ENCODE measurements at regions of chrX and their contacts with region 1.

Region 1: GRCh38 chrX:136880452-136881013 is at the start of gene RBMX:
- DNase-seq: peak; percentile 94
- ATAC-seq: peak; percentile 84
- H3K4me3 Mint-ChIP-seq: peak within 1 kb of the TSS; percentile 97
- H3K27ac Mint-ChIP-seq: peak within 1 kb of the TSS; percentile 99
- H3K4me1 Mint-ChIP-seq: peaks cover 21% of the 10 kb centered on the region
- H3K27me3 Mint-ChIP-seq: no peaks in the 10 kb centered on the region
- total RNA-seq, gene RBMX: 265 to 276 TPM

Region 2: DNA sequence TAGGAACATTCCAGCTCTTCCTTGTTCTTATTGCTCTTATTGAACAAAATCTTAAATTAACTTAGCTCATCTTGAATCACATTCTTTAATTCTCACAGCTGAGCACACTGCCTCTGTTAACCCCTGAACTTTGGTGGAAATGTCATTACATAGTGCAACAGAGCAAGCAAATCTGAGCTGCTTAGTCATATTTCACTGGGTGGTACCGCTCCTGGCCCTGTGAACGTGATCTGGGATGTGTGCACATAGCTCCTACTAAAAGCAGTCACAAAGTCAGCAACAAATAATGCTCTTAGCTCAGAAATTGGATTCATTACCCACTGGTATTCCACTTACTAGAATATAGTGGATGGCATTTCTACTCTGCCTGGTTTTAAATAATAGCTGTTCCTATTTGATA is 127.7 kb before region 1 on chrX:
- CTCF ChIA-PET with region 1: no interaction called
- POLR2A ChIA-PET with region 1: interaction called, 10 read pairs
- DNase-seq: no peak
- ATAC-seq: no peak
- H3K4me3 Mint-ChIP-seq: no peak overlapping the region
- H3K27ac Mint-ChIP-seq: no peak overlapping the region
- H3K4me1 Mint-ChIP-seq: peaks cover 88% of the 10 kb centered on the region
- H3K27me3 Mint-ChIP-seq: no peaks in the 10 kb centered on the region

Region 3: GRCh38 chrX:136767104-136767941 is 113.2 kb before region 1 on chrX:
- CTCF ChIA-PET with region 1: no interaction called
- POLR2A ChIA-PET with region 1: interaction called, 25 read pairs
- DNase-seq: peak; percentile 65
- ATAC-seq: peak; percentile 72
- H3K4me3 Mint-ChIP-seq: peak overlapping the region; percentile 75
- H3K27ac Mint-ChIP-seq: peak overlapping the region; percentile 89
- H3K4me1 Mint-ChIP-seq: peaks cover 71% of the 10 kb centered on the region
- H3K27me3 Mint-ChIP-seq: no peaks in the 10 kb centered on the region

Region 4: GRCh38 chrX:136780763-136781162 is 99.8 kb before region 1 on chrX and contains the start of gene ARHGEF6:
- CTCF ChIA-PET with region 1: interaction called, 3 read pairs
- POLR2A ChIA-PET with region 1: interaction called, 68 read pairs
- DNase-seq: peak; percentile 65
- ATAC-seq: peak; percentile 72
- H3K4me3 Mint-ChIP-seq: peak within 1 kb of the TSS; percentile 85
- H3K27ac Mint-ChIP-seq: peak within 1 kb of the TSS; percentile 92
- H3K4me1 Mint-ChIP-seq: peaks cover 55% of the 10 kb centered on the region
- H3K27me3 Mint-ChIP-seq: no peaks in the 10 kb centered on the region
- total RNA-seq, gene ARHGEF6: 97.8 to 99.0 TPM

Region 5: GRCh38 chrX:136909706-136910564 is 29.4 kb after region 1 on chrX:
- CTCF ChIA-PET with region 1: no interaction called
- POLR2A ChIA-PET with region 1: interaction called, 22 read pairs
- DNase-seq: peak; percentile 80
- ATAC-seq: peak; percentile 78
- H3K4me3 Mint-ChIP-seq: peak overlapping the region; percentile 86
- H3K27ac Mint-ChIP-seq: peak overlapping the region; percentile 56
- H3K4me1 Mint-ChIP-seq: peaks cover 19% of the 10 kb centered on the region
- H3K27me3 Mint-ChIP-seq: no peaks in the 10 kb centered on the region

Region 6: GRCh38 chrX:136999024-136999423 is 118.5 kb after region 1 on chrX:
- CTCF ChIA-PET with region 1: no interaction called
- POLR2A ChIA-PET with region 1: no interaction called
- DNase-seq: no peak
- ATAC-seq: no peak
- H3K4me3 Mint-ChIP-seq: no peak overlapping the region
- H3K27ac Mint-ChIP-seq: no peak overlapping the region
- H3K4me1 Mint-ChIP-seq: no peaks in the 10 kb centered on the region
- H3K27me3 Mint-ChIP-seq: no peaks in the 10 kb centered on the region

Measured in activated CD8-positive, alpha-beta T cell treated with anti-CD3 and anti-CD28 coated beads, Interleukin-2, amount 10 ng/mL, durations not matched to agents 7 days and 5 days (primary cell).